CD8-positive, alpha-beta memory T cell (primary cell): ENCODE measurements at regions of chr3 and their contacts with region 1.

Region 1: GRCh38 chr3:183185696-183186095 is 23.2 kb upstream of the LAMP3 start:
- DNase-seq: no peak
- H3K4me3 ChIP-seq: no peak overlapping the region
- H3K4me3 Mint-ChIP-seq: no peak overlapping the region
- H3K27ac ChIP-seq: no peak overlapping the region
- H3K27ac Mint-ChIP-seq: no peak overlapping the region
- H3K4me1 ChIP-seq: no peaks in the 10 kb centered on the region
- H3K4me1 Mint-ChIP-seq: no peaks in the 10 kb centered on the region
- H3K27me3 ChIP-seq: no peaks in the 10 kb centered on the region
- H3K27me3 Mint-ChIP-seq: peaks cover 0 to 1% of the 10 kb centered on the region in 2 donors

Region 2: DNA sequence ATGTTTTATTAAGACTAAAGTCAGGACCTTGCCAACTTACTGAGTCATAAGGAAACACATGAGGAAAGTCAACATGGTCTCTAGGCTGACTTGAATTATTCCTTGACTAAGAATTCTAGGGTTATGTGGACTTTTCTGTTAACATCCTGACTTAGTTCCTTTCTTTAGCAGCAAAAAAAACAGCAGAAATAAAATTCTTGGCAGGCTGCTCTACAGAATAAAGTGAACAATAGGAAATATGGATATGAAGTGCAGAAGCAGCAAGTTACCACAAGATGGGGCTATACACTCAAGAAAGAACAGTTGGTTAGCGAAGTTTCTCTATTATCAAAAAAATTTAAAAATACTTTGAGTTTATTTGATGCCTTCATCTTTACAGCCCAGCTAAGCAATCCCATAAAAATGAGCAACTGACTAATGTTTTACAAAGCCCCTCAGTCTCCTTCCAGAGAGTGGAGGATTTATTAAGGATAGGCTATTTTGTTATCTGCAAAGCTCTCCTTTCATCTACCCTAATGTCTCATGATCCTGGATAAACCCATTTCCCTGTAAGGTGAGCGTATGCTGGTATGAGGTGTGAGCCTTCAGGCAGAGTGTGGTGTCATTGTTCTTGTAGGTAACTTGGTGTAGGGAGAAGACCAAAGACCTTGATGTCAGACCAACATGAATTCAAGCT is 63.3 kb before region 1 on chr3:
- CTCF ChIA-PET with region 1: interaction called, 16 read pairs
- POLR2A ChIA-PET with region 1: interaction called, 3 read pairs
- DNase-seq: peak in 2 of 5 donors; percentile 32 to 49
- H3K4me3 ChIP-seq: no peak overlapping the region
- H3K4me3 Mint-ChIP-seq: no peak overlapping the region
- H3K27ac ChIP-seq: no peak overlapping the region
- H3K27ac Mint-ChIP-seq: no peak overlapping the region
- H3K4me1 ChIP-seq: no peaks in the 10 kb centered on the region
- H3K4me1 Mint-ChIP-seq: peaks cover 0 to 4% (median 4%) of the 10 kb centered on the region in 3 donors
- H3K27me3 ChIP-seq: no peaks in the 10 kb centered on the region
- H3K27me3 Mint-ChIP-seq: peaks cover 4% of the 10 kb centered on the region in 2 donors

Region 3: GRCh38 chr3:183385698-183386613 is 200.3 kb after region 1 on chr3:
- CTCF ChIA-PET with region 1: interaction called, 97 read pairs
- POLR2A ChIA-PET with region 1: no interaction called
- DNase-seq: peak in 4 of 5 donors; percentile 31 to 58 (median 46)
- H3K4me3 ChIP-seq: no peak overlapping the region
- H3K4me3 Mint-ChIP-seq: no peak overlapping the region
- H3K27ac ChIP-seq: no peak overlapping the region
- H3K27ac Mint-ChIP-seq: peak overlapping the region in 2 of 8 donors; percentile 56 to 76
- H3K4me1 ChIP-seq: no peaks in the 10 kb centered on the region
- H3K4me1 Mint-ChIP-seq: peaks cover 0 to 4% (median 3%) of the 10 kb centered on the region in 3 donors
- H3K27me3 ChIP-seq: no peaks in the 10 kb centered on the region
- H3K27me3 Mint-ChIP-seq: no peaks in the 10 kb centered on the region

Region 4: GRCh38 chr3:183447206-183448001 is 261.7 kb after region 1 on chr3:
- CTCF ChIA-PET with region 1: no interaction called
- POLR2A ChIA-PET with region 1: no interaction called
- DNase-seq: peak; percentile 40 to 79 (median 61)
- H3K4me3 ChIP-seq: peak overlapping the region; percentile 85
- H3K4me3 Mint-ChIP-seq: peak overlapping the region; percentile 90 to 98 (median 96)
- H3K27ac ChIP-seq: peak overlapping the region; percentile 83
- H3K27ac Mint-ChIP-seq: peak overlapping the region; percentile 23 to 97 (median 83)
- H3K4me1 ChIP-seq: peaks cover 9% of the 10 kb centered on the region
- H3K4me1 Mint-ChIP-seq: peaks cover 20 to 27% (median 21%) of the 10 kb centered on the region in 3 donors
- H3K27me3 ChIP-seq: no peaks in the 10 kb centered on the region
- H3K27me3 Mint-ChIP-seq: peaks cover 0 to 2% of the 10 kb centered on the region in 2 donors